HEK293T (cell line): ENCODE measurements at regions of chr18 and their contacts with region 1.

Region 1: DNA sequence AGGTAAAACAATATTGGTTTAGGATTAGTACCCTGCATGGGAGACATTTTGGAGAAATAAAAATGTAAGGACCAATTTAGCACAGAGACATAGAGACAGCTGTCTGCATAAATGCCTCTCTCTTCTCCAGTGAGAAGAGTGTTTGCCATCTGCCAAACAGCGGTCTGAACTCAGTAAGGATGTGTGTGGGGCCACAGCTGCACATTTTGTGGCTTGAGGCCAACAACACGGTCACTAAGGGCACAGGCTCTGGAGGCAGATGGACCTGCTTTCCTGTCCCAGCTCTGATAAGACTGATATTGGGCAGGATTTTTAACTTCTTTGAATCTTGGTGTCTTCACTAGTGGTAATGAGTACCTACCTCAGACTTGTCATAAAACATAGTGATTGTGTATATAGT is 10.2 kb downstream of the ZBTB14 start:
- DNase-seq: no peak

Region 2: GRCh38 chr18:5295981-5296705 is 10.8 kb after region 1 on chr18:
- CTCF ChIA-PET with region 1: no interaction called
- POLR2A ChIA-PET with region 1: interaction called, 13 read pairs
- DNase-seq: peak; percentile 82